Prostate gland (tissue), 2 donors: ENCODE measurements at regions of chr1 and their contacts with region 1.

Region 1: DNA sequence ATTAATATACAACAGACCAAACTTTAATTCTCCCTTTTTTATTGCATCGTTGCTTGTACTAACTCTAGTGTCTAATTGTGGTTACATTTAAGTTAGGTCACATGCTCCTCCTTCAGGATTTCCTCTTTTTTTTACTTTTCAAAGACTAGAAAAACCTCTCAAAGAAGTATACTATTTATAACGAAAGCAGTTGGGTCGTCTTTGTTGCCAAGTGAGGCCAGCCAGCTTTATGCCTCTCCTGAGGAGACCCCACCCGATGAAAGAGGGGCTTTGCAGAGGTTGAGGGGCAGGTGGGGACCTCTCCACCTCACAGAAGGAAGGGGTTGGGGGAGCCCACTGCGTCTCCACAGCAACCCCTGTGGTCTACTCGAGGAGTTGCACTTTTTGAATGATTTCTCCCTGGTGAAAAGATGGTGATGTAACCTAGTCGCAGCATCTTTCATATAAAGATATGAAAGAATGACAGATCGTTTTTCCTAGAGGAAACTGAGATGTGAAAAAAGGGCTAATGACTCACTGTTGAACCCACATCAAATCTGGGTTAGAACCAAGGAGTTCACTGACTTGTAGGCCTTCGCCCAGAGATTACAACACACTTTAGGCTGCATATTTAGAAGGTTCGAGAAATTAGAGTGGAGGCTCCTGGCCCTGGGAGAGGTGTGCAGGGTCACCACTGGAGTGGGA is 6.4 kb downstream of the TGFB2 start:
- DNase-seq: no peak
- H3K4me3 ChIP-seq: peak overlapping the region in 1 of 2 donors; percentile 12
- H3K27ac ChIP-seq: peak overlapping the region; percentile 35 to 50
- H3K4me1 ChIP-seq: no peaks in the 10 kb centered on the region
- H3K27me3 ChIP-seq: no peaks in the 10 kb centered on the region
- CTCF ChIP-seq: no peak
- POLR2A ChIP-seq: no peak

Region 2: GRCh38 chr1:218886101-218886871 is 534.8 kb after region 1 on chr1:
- intact Hi-C with region 1: loop called (anchors 10 kb)
- DNase-seq: peak; percentile 27
- H3K4me3 ChIP-seq: no peak overlapping the region
- H3K27ac ChIP-seq: peak overlapping the region in 1 of 2 donors; percentile 26
- H3K4me1 ChIP-seq: no peaks in the 10 kb centered on the region
- H3K27me3 ChIP-seq: no peaks in the 10 kb centered on the region
- CTCF ChIP-seq: no peak
- POLR2A ChIP-seq: no peak